Esophagus muscularis mucosa (tissue), 4 donors: ENCODE measurements at regions of chr20 and their contacts with region 1.

Region 1: GRCh38 chr20:57748601-57749130 is 38.9 kb upstream of the PMEPA1 start:
- DNase-seq: no peak
- H3K4me3 ChIP-seq: peak overlapping the region; percentile 46 to 60 (median 50)
- H3K27ac ChIP-seq: peak overlapping the region; percentile 75 to 85 (median 79)
- H3K4me1 ChIP-seq: peaks cover 24 to 40% (median 37%) of the 10 kb centered on the region in 4 donors
- H3K27me3 ChIP-seq: no peaks in the 10 kb centered on the region
- CTCF ChIP-seq: peak in 2 of 3 experiments; percentile 6 to 10
- EP300 ChIP-seq: peak; percentile 45
- POLR2A ChIP-seq: no peak

Region 2: GRCh38 chr20:57680131-57680716 is 68.4 kb before region 1 on chr20:
- intact Hi-C with region 1: loop called (anchors 10 kb)
- DNase-seq: no peak
- H3K4me3 ChIP-seq: no peak overlapping the region
- H3K27ac ChIP-seq: peak overlapping the region in 1 of 4 donors; percentile 77
- H3K4me1 ChIP-seq: peaks cover 37 to 90% (median 79%) of the 10 kb centered on the region in 4 donors
- H3K27me3 ChIP-seq: no peaks in the 10 kb centered on the region
- CTCF ChIP-seq: no peak
- EP300 ChIP-seq: no peak
- POLR2A ChIP-seq: no peak

Region 3: GRCh38 chr20:57709931-57710799 is 38.5 kb before region 1 on chr20 and contains the start of gene PMEPA1:
- intact Hi-C with region 1: loop called (anchors 5 kb)
- DNase-seq: peak; percentile 97
- H3K4me3 ChIP-seq: peak within 1 kb of the TSS; percentile 67 to 86 (median 81)
- H3K27ac ChIP-seq: peak within 1 kb of the TSS; percentile 88 to 94 (median 90)
- H3K4me1 ChIP-seq: peaks cover 45 to 87% (median 78%) of the 10 kb centered on the region in 4 donors
- H3K27me3 ChIP-seq: no peaks in the 10 kb centered on the region
- CTCF ChIP-seq: peak in 1 of 3 experiments; percentile 25
- EP300 ChIP-seq: no peak
- POLR2A ChIP-seq: peak; percentile 65
- total RNA-seq, gene PMEPA1: 10.4 to 37.8 (median 17.4) TPM

Region 4: DNA sequence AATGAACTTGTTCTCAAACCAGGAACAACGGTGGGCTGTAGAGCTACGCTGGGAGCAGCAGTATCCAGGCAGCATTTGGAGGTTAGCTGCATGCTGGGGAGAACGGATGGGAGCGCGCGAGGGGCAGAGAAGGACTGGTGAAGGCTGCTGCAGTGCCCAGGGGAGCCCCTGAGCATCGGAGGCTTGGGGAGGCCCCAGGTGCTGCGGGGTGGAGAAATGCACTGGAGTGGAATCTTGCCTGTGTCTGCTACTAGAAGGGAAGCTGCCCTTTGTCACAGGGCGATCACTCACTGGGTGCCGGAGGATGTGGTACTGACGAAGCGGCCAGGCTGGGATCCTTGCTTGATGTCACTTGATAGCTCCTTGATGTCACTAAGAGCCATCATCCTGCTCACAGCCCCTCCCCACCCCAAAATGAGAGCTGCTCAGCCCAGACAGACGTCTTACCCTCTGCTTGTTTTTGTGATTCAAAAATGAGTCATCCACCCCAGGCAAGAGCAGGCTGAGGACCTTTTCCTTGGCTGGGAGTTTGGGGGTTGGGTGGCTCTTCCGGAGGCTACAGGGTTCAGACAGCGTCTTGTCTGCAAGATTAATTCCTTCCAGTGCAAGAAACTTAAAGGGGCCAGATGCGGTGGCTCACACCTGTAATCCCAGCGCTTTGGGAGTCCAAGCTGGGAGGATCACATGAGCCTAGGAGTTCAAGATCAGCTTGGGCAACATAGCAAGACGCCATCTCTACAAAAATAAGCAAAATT is 23.8 kb after region 1 on chr20:
- intact Hi-C with region 1: no loop called
- DNase-seq: no peak
- H3K4me3 ChIP-seq: no peak overlapping the region
- H3K27ac ChIP-seq: no peak overlapping the region
- H3K4me1 ChIP-seq: no peaks in the 10 kb centered on the region
- H3K27me3 ChIP-seq: peaks cover 0 to 4% (median 0%) of the 10 kb centered on the region in 4 donors
- CTCF ChIP-seq: no peak
- EP300 ChIP-seq: no peak
- POLR2A ChIP-seq: no peak